ENCODE measurements at regions of chr11 and their contacts with region 1.

Region 1: DNA sequence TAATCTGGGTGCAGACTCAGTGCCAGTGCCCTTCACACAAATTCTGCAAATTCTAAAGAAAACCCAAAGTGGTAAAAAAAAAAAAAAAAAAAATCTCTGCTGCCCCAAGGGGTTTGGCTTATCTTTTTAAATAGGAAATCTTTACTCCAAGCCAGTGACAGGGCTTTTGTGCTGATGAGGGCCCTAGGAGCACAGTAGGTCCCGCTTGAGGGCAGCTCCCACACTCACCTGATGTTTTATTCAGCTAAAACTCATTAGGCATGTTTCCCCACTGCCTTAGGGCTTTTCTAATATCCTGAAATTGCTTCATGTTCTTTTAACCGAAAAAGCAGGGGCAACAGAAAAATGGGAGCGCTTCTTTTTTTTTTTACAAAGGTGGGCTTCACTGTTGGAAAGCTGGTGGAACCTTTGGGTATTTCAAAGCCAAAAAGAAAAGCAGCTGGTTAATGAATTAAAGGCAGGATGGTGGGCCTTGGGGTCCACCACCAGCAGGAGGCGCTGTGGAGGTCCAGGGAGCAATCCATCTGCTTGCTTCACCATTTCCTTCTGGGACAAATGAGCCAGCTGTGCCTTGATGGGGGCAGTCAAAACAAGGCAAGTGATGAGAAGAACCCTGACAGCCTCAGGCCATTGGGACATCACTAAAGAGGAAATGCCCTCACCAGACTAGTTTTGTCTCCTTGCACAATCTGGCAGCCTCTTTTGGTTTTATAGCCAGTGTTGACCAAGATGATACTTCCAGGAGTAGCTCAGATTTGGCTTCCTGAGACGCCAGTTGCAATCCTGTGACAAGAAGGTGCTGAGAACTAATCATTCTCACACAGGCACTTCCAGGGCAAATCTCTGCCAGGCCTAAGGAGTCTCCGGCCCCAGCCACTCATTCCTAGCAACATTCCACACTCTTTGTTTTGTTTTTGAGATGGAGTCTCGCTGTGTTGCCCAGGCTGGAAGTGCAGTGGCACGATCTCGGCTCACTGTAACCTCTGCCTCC is 38.4 kb upstream of the WEE1 start:
- DNase-seq: peak; percentile 90
- ATAC-seq: peak; percentile 94
- H3K4me3 ChIP-seq: no peak overlapping the region
- H3K27ac ChIP-seq: no peak overlapping the region
- H3K4me1 ChIP-seq: no peaks in the 10 kb centered on the region
- H3K27me3 ChIP-seq: no peaks in the 10 kb centered on the region
- CTCF ChIP-seq: peak; percentile 92

Region 2: GRCh38 chr11:9613118-9613829 is 78.2 kb after region 1 on chr11:
- intact Hi-C with region 1: loop called (anchors 10 kb)
- DNase-seq: peak; percentile 95
- ATAC-seq: peak; percentile 94
- H3K4me3 ChIP-seq: peak overlapping the region; percentile 53
- H3K27ac ChIP-seq: peak overlapping the region; percentile 94
- H3K4me1 ChIP-seq: peaks cover 20% of the 10 kb centered on the region
- H3K27me3 ChIP-seq: no peaks in the 10 kb centered on the region
- CTCF ChIP-seq: peak; percentile 94